ENCODE measurements at regions of chr3 and their contacts with region 1.

Region 1: DNA sequence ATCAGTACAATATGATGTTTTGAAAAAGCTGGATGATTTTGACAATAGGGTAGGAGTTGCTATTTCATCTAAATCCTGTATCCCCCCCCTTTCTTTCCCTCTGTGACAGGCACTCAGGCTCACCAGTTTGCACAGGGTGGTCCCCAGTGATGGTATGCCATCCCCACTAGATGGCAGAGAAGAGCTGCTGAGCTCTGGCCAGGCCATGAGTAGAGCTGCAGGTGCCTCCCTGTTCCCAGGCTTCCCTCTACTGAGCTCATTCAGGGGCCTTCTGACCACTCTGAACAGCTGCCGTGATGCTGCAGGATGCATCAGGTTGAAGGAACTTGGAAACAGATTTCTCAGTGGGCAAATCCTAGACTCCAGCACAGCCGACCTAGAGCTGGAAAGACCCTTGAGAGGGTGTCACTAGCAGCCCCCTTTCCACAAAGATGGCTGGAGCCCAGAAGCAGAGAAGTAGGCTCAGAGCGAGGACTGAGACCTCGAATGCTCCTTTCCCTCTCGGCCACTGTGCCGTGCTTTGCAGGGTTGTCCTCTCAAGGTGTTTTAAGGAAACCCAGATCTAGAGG is 45.1 kb downstream of the EFCAB12 start:
- DNase-seq: no peak
- H3K4me3 ChIP-seq: no peak overlapping the region
- H3K27me3 ChIP-seq: no peaks in the 10 kb centered on the region
- CTCF ChIP-seq: peak; percentile 87

Region 2: DNA sequence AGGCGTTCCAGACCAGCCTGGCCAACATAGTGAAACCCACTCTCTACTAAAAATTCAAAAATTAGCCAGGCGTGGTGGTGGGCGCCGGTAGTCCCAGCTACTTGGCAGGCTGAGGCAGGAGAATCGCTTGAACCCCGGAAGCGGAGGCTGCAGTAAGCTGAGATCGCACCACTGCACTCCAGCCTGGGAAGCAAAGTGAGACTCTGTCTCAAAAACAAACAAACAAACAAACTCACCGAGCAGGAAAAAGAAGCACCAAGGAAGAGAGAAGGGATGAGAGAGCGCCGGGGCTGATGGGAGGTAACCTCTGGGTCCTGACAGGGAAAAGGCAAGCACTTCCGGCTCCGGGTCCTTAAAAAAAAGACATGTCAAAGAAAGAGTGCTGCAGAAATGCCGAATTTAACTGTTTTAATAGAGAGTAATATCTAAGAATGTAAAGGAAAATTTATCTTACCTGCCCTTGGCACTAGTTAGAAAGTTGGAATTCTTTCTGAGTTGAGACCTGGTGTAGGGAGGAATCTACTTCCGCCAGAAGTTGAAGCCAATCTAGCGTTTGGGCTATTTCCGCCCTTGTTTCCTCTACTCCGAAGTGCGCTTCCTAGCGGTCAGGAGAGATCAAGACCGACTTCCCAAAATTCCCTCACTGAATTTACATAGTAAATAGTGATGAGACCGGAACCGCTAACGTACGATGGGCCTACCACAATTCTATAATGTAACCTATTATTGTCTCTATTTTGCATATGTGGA is 15.9 kb after region 1 on chr3:
- CTCF ChIA-PET with region 1: interaction called, 12 read pairs
- POLR2A ChIA-PET with region 1: interaction called, 3 read pairs
- DNase-seq: peak; percentile 84
- H3K4me3 ChIP-seq: peak overlapping the region; percentile 56
- H3K27me3 ChIP-seq: no peaks in the 10 kb centered on the region
- CTCF ChIP-seq: peak; percentile 81

Measured in BJ (cell line).